ENCODE measurements at regions of chr16 and their contacts with region 1.

Region 1: GRCh38 chr16:77169650-77170236 is 21.2 kb upstream of the MON1B start:
- DNase-seq: no peak
- H3K4me3 ChIP-seq: no peak overlapping the region
- H3K27ac ChIP-seq: no peak overlapping the region
- H3K4me1 ChIP-seq: no peaks in the 10 kb centered on the region
- H3K27me3 ChIP-seq: no peaks in the 10 kb centered on the region
- CTCF ChIP-seq: no peak
- EP300 ChIP-seq: no peak
- POLR2A ChIP-seq: no peak

Region 2: DNA sequence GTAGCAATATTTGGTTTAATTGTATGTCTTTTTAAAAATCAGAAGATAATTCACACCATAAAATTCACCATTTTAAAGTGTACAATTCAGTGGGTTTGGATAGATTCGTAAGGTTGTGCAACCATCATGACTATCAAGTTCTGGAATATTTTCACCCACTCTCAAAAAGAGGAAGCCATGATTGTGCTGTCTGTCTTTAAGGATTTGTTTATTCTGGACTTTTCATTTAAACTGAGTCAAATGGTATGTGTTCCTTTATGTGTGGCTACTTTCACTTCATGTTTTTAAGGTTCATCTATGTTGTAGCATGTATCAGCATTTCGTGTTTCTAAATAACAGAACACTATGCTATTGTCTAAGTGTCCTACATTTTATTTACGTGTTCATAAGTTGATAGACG is 1375.3 kb before region 1 on chr16:
- intact Hi-C with region 1: loop called in 1 of 4 experiments (anchors 10 kb)
- DNase-seq: no peak
- H3K4me3 ChIP-seq: no peak overlapping the region
- H3K27ac ChIP-seq: no peak overlapping the region
- H3K4me1 ChIP-seq: no peaks in the 10 kb centered on the region
- H3K27me3 ChIP-seq: no peaks in the 10 kb centered on the region
- CTCF ChIP-seq: no peak
- EP300 ChIP-seq: no peak
- POLR2A ChIP-seq: no peak